ENCODE measurements at regions of chr3 and their contacts with region 1.

Region 1: GRCh38 chr3:175957002-175957401 is 1097.9 kb downstream of the NAALADL2 start:
- DNase-seq: no peak
- H3K4me3 ChIP-seq: no peak overlapping the region
- H3K27ac ChIP-seq: no peak overlapping the region
- H3K27me3 ChIP-seq: no peaks in the 10 kb centered on the region
- CTCF ChIP-seq: peak in 35 of 56 donors; percentile 15 to 56 (median 30)

Region 2: GRCh38 chr3:175338775-175339538 is 618.0 kb before region 1 on chr3:
- intact Hi-C with region 1: no loop called
- DNase-seq: no peak
- H3K4me3 ChIP-seq: peak overlapping the region in 1 of 59 donors; percentile 31
- H3K27ac ChIP-seq: no peak overlapping the region
- H3K27me3 ChIP-seq: no peaks in the 10 kb centered on the region
- CTCF ChIP-seq: no peak

Region 3: GRCh38 chr3:176087066-176087697 is 130.2 kb after region 1 on chr3:
- intact Hi-C with region 1: no loop called
- DNase-seq: no peak
- H3K4me3 ChIP-seq: no peak overlapping the region
- H3K27ac ChIP-seq: no peak overlapping the region
- H3K27me3 ChIP-seq: no peaks in the 10 kb centered on the region
- CTCF ChIP-seq: no peak

Region 4: GRCh38 chr3:176430244-176431037 is 473.4 kb after region 1 on chr3:
- intact Hi-C with region 1: loop called in 1 of 2 experiments (anchors 10 kb)
- DNase-seq: peak in 1 of 10 donors; percentile 54
- H3K4me3 ChIP-seq: no peak overlapping the region
- H3K27ac ChIP-seq: no peak overlapping the region
- H3K27me3 ChIP-seq: no peaks in the 10 kb centered on the region
- CTCF ChIP-seq: peak; percentile 38 to 85 (median 71)